Right ventricle myocardium superior (tissue), 1 donor: ENCODE measurements at regions of chr4 and their contacts with region 1.

Region 1: DNA sequence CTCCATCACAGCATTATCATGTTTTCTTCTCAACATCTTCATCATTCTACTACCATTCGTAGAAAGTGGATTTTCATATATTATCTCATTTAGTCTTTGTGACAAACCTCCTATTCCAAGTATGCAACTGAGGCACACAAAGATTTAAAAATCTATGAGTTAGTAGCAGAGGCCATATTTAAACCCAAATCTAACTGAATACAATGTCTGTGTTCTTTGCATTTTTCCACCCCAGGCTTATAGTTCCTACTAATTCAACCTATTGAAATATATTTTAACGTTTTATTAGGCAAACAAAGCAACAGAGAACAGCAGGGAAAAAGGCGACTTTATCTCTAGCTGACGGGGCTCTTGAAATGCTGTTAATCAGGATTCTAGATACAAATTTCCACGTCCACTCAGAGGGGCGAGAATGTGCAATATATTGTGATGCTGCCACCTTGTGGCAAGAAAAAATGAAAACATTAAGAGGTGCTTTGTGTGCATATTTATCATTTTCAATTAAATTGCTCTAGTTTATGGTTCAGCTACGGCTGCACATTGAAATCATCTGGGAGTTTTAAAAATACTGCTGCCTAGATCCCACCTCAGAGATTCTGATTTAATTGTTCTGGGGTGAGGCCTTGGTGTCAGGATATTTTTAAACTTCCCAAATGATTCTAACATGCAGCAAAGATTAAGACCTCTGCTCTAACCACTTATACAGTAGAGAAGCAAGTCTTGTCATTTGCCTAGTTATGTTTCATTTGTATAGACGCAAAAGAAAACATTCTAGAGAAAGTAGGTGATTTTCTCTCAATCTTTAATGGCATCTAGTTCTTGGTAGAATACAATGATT is 315.9 kb downstream of the MAPK10 start:
- DNase-seq: no peak
- ATAC-seq: peak; percentile 85

Region 2: GRCh38 chr4:85084380-85085094 is 959.4 kb before region 1 on chr4:
- intact Hi-C with region 1: loop called (anchors 10 kb)
- DNase-seq: no peak
- ATAC-seq: peak; percentile 63

Region 3: GRCh38 chr4:85756938-85757337 is 287.0 kb before region 1 on chr4:
- intact Hi-C with region 1: loop called (anchors 10 kb)
- DNase-seq: no peak
- ATAC-seq: peak; percentile 73

Region 4: GRCh38 chr4:85790582-85790981 is 253.4 kb before region 1 on chr4:
- intact Hi-C with region 1: loop called (anchors 10 kb)
- DNase-seq: no peak
- ATAC-seq: no peak

Region 5: DNA sequence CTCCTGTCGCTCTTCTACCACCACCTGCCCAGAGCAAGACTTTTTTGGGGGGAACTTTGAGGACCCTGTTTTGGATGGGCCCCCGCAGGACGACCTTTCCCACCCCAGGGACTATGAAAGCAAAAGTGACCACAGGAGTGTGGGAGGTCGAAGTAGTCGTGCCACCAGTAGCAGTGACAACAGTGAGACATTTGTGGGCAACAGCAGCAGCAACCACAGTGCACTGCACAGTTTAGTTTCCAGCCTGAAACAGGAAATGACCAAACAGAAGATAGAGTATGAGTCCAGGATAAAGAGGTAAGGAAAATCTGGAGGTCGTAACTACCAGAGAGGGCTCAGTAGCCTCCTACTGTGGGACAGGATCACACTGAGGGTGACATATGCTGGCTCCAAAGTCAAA is 48.6 kb before region 1 on chr4:
- intact Hi-C with region 1: no loop called
- DNase-seq: no peak
- ATAC-seq: no peak